B cell (primary cell): ENCODE measurements at regions of chrX and their contacts with region 1.

Region 1: DNA sequence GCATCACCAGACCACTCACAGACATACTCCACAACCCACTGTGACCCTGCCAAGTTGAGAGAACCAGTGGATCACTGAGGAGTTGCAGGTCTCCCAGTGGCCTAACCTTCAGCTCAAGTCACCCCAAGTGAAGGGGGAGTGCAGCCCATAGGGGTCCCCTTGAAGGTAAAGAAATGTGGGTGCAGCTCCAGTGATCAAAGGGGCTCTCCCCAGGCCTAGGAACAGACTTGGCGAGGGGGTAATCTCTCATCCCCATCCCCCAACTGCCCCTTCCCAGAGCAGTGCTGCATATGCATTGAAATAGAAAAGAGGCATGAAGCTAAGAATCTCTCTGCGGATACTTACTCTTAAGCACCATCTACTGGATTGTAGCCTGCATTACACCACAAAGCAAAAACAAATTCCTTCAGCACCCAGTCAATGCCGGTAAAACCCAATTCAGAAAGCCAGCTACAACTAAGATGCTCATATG is 27.0 kb downstream of the MAGEE1 start:
- DNase-seq: peak; percentile 33
- ATAC-seq: no peak
- H3K4me3 ChIP-seq: no peak overlapping the region
- H3K4me3 Mint-ChIP-seq: no peak overlapping the region
- H3K27ac ChIP-seq: no peak overlapping the region
- H3K27ac Mint-ChIP-seq: no peak overlapping the region
- H3K4me1 ChIP-seq: no peaks in the 10 kb centered on the region
- H3K4me1 Mint-ChIP-seq: peaks cover 2% of the 10 kb centered on the region
- H3K27me3 ChIP-seq: no peaks in the 10 kb centered on the region
- H3K27me3 Mint-ChIP-seq: no peaks in the 10 kb centered on the region
- CTCF ChIP-seq: peak; percentile 69

Region 2: DNA sequence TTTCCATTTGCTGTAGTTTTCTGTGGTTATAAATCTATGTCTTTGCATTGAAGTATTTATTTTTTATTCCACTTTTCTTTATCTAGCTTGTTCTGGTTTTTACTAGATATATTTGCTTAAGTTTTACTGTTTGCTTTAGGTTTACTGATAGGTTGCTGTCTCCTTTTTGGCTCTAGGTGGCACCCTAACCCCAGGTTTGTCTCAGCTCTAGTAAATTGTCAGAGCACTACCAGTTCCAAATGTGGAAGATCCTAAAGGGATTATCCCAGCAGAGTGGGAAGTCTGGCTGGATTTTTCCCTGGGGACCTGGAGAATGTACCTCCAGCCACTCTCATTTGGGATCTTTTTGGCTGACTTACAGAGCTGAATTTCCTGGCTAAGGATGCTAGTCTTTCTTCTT is 175.5 kb before region 1 on chrX:
- CTCF ChIA-PET with region 1: interaction called, 45 read pairs
- POLR2A ChIA-PET with region 1: no interaction called
- intact Hi-C with region 1: no loop called
- DNase-seq: peak; percentile 52
- ATAC-seq: no peak
- H3K4me3 ChIP-seq: no peak overlapping the region
- H3K4me3 Mint-ChIP-seq: no peak overlapping the region
- H3K27ac ChIP-seq: no peak overlapping the region
- H3K27ac Mint-ChIP-seq: no peak overlapping the region
- H3K4me1 ChIP-seq: no peaks in the 10 kb centered on the region
- H3K4me1 Mint-ChIP-seq: no peaks in the 10 kb centered on the region
- H3K27me3 ChIP-seq: no peaks in the 10 kb centered on the region
- H3K27me3 Mint-ChIP-seq: no peaks in the 10 kb centered on the region
- CTCF ChIP-seq: peak; percentile 76

Region 3: DNA sequence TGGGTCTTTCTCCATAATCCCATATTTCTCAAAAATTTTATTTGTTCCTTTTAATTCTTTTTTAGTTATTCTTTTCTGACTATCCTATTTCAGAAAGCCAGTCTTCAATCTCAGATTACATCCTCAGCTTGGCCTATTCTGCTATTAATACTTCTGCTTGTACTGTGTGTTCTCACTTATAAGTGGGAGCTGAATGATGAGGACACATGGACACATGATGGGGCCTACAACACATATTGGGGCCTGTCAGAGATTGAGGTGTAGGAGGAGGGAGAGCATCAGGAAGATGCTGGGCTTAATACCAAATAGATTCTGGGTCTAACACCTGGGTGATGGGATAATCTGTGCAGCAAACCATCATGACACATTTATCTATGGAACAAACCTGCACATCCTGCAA is 55.3 kb after region 1 on chrX:
- CTCF ChIA-PET with region 1: no interaction called
- POLR2A ChIA-PET with region 1: no interaction called
- intact Hi-C with region 1: no loop called
- DNase-seq: no peak
- ATAC-seq: no peak
- H3K4me3 ChIP-seq: no peak overlapping the region
- H3K4me3 Mint-ChIP-seq: no peak overlapping the region
- H3K27ac ChIP-seq: no peak overlapping the region
- H3K27ac Mint-ChIP-seq: no peak overlapping the region
- H3K4me1 ChIP-seq: no peaks in the 10 kb centered on the region
- H3K4me1 Mint-ChIP-seq: no peaks in the 10 kb centered on the region
- H3K27me3 ChIP-seq: no peaks in the 10 kb centered on the region
- H3K27me3 Mint-ChIP-seq: no peaks in the 10 kb centered on the region
- CTCF ChIP-seq: no peak